ENCODE measurements at regions of chr9 and their contacts with region 1.

Region 1: DNA sequence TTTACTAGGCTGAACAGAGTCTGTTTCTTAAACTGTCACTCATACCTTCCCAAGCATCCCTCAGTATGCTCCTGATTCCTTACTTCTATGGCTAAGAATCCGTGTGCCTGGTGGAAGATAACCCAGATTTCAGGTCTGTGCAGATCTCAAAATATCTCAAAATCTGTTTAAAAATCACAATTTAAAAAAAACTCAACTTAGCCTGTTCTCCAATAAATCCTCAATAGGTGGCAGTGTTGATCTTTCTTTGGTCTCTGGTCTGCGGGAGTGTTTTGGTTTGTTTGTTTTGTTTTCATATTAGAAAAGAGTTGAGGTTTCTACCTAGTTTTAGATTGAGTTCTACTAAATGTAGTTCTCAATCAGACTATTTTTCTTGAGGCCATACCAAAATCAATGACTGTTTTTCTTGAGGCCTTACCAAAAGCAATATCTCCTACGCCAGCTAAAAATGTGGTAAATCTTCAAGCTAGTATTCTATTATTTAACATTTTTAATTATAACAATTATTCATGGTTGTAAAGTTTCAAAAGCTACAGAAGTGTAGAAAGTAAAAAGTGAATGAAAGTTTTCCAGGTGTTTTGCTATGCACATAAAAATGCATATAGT is 57.9 kb downstream of the TGFBR1 start:
- DNase-seq: peak; percentile 51
- ATAC-seq: peak; percentile 67
- H3K4me3 ChIP-seq: no peak overlapping the region
- H3K27ac ChIP-seq: no peak overlapping the region
- H3K4me1 ChIP-seq: no peaks in the 10 kb centered on the region; the same call in 1 of the 2 replicates
- H3K27me3 ChIP-seq: peaks cover 7% of the 10 kb centered on the region
- CTCF ChIP-seq: peak; percentile 72
- POLR2A ChIP-seq: no peak
- RAD21 ChIP-seq: peak; percentile 78

Region 2: DNA sequence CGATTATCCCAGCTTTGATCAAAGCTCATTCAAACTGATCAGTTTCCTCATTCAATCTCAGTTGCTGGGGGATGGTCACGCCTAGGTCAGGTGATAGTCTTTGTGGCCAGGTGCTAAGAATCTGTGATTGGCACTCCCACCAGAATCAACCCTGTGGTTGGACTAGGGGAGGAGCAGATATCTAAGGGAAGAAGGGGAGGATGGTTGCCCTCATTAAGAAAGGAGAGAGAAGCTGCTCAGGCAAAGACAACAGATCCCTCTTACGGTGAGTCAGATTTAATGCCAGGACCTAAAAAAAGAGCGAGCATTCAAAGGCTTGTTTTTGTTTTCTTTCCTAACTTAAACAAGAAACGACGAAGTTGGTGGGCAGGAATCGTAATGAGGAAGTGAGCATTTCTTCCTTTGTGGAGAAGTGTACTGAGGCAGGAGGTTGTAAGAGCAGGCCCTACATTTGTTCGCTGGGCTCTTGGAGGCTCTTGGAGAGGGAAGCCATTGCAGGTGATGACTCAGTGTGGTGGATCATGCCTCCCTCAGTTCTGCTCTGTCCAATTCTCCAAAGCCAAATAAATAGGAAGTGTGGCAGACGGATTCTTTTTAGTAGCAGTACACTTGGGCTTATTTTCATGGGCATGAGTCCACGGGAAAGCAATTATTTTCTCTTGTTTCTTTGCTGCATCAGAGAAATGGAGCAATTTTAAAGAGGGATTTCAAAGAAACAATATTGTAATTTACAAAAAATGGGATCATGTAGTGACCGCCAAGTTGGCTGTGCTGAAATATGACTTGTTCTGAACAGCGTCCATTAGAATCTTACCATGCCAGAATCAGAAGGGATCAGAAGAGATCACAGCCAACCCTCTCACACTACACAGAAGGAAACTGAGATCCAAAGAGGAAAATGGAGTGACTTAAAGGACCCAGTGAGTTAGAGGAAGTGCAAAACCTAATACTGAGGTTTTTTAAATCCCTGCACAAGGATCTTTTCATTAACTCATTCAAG is 76.6 kb before region 1 on chr9:
- CTCF ChIA-PET with region 1: no interaction called
- POLR2A ChIA-PET with region 1: no interaction called
- dilution Hi-C with region 1: no loop called
- in situ Hi-C with region 1: no loop called
- intact Hi-C with region 1: no loop called
- DNase-seq: peak; percentile 90
- ATAC-seq: peak; percentile 95
- H3K4me3 ChIP-seq: no peak overlapping the region
- H3K27ac ChIP-seq: no peak overlapping the region
- H3K4me1 ChIP-seq: peaks cover 12% of the 10 kb centered on the region
- H3K27me3 ChIP-seq: peaks cover 5% of the 10 kb centered on the region; the same call in 1 of the 2 replicates
- CTCF ChIP-seq: no peak
- POLR2A ChIP-seq: no peak
- RAD21 ChIP-seq: no peak

Region 3: GRCh38 chr9:99150451-99151171 is 12.3 kb before region 1 on chr9:
- CTCF ChIA-PET with region 1: interaction called, 3 read pairs
- POLR2A ChIA-PET with region 1: no interaction called
- dilution Hi-C with region 1: no loop called
- in situ Hi-C with region 1: no loop called
- intact Hi-C with region 1: loop called (anchors 1 kb)
- DNase-seq: no peak
- ATAC-seq: no peak
- H3K4me3 ChIP-seq: no peak overlapping the region
- H3K27ac ChIP-seq: no peak overlapping the region
- H3K4me1 ChIP-seq: peaks cover 11% of the 10 kb centered on the region
- H3K27me3 ChIP-seq: no peaks in the 10 kb centered on the region
- CTCF ChIP-seq: no peak
- POLR2A ChIP-seq: no peak
- RAD21 ChIP-seq: no peak

Region 4: DNA sequence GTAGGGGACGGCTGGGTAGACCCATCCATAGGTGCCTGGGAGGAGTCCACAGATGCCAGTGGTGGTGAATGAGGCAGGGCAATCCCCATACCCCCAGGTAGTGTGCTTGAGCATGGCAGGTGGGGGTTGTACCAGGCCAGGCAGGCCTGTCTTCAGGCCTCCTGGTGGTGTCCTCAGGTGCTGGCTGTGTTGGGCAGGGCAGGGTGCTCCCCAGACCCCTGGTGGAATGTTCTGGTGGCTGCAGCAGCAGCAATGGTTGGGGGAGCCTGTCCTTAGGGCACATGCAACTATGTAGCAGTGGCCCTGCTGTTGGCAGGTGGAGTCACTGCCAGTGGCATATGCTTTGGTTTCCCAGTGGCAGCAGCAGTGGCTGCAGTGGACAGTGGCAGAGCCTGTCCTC is 48.9 kb after region 1 on chr9:
- CTCF ChIA-PET with region 1: no interaction called
- POLR2A ChIA-PET with region 1: no interaction called
- dilution Hi-C with region 1: no loop called
- in situ Hi-C with region 1: no loop called
- intact Hi-C with region 1: no loop called
- DNase-seq: no peak
- ATAC-seq: no peak
- H3K4me3 ChIP-seq: no peak overlapping the region
- H3K27ac ChIP-seq: no peak overlapping the region
- H3K4me1 ChIP-seq: no peaks in the 10 kb centered on the region
- H3K27me3 ChIP-seq: no peaks in the 10 kb centered on the region
- CTCF ChIP-seq: no peak
- POLR2A ChIP-seq: no peak
- RAD21 ChIP-seq: no peak

Region 5: DNA sequence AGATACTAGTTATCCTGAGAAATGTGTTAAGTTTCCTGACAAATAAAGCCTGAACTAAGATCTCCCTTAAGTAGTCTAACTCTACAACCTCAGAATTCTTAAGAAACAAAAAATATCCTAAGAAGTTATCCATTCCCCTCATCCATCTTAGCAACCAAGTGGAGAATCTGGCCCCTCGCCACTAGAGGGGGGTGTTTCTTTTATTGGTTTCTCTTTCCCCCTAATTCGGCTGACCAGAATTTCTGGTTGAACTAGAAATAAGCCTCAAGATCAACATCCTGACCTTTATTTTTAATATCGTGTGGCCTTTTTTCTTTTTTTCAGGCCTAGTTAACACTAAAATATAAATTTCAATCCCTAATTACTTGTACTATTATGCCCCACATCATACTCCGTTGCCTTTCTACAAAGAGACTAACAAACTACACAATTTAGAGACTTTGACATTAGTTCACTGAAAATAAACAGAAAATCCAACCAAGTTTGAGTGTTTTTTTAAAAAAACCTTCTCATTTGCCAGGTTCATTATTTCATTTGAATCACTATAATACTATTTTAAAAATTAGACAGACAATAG is 644.5 kb after region 1 on chr9:
- CTCF ChIA-PET with region 1: no interaction called
- POLR2A ChIA-PET with region 1: no interaction called
- dilution Hi-C with region 1: no loop called
- in situ Hi-C with region 1: no loop called
- intact Hi-C with region 1: loop called (anchors 5 kb)
- DNase-seq: peak; percentile 59
- ATAC-seq: peak; percentile 82
- H3K4me3 ChIP-seq: no peak overlapping the region
- H3K27ac ChIP-seq: no peak overlapping the region
- H3K4me1 ChIP-seq: no peaks in the 10 kb centered on the region
- H3K27me3 ChIP-seq: no peaks in the 10 kb centered on the region
- CTCF ChIP-seq: peak; percentile 82
- POLR2A ChIP-seq: no peak
- RAD21 ChIP-seq: peak; percentile 65